ENCODE measurements at regions of chr5 and their contacts with region 1.

Region 1: GRCh38 chr5:140113699-140114263 is at the start of gene PURA:
- DNase-seq: peak; percentile 92
- ATAC-seq: peak; percentile 90
- H3K4me3 Mint-ChIP-seq: peak within 1 kb of the TSS; percentile 94
- H3K27ac Mint-ChIP-seq: peak within 1 kb of the TSS; percentile 92
- H3K4me1 Mint-ChIP-seq: peaks cover 72% of the 10 kb centered on the region
- H3K27me3 Mint-ChIP-seq: peaks cover 6% of the 10 kb centered on the region
- CTCF ChIP-seq: no peak
- total RNA-seq, gene PURA: 13.2 and 14.9 TPM in 2 replicates

Region 2: DNA sequence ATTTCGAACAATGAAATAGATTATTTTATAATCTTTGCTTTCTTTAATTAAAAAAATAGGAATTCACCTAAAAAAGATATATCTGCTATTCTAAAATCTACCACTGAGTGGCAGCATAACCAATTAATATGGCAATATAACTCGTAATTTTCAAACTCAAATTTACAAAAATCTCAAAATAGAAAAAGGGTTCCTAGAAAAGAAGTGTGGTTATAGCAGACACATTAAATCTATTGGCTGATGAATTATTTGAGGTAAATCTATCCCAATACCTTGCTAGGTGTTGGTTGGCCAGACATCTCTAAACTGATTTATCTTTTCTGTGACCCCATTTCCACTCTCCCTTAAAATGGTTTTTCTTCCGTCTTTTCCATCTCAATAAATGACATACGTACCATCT is 40.5 kb before region 1 on chr5:
- CTCF ChIA-PET with region 1: interaction called, 6 read pairs
- POLR2A ChIA-PET with region 1: interaction called, 5 read pairs
- intact Hi-C with region 1: loop called (anchors 2 kb)
- DNase-seq: no peak
- ATAC-seq: no peak
- H3K4me3 Mint-ChIP-seq: no peak overlapping the region
- H3K27ac Mint-ChIP-seq: no peak overlapping the region
- H3K4me1 Mint-ChIP-seq: no peaks in the 10 kb centered on the region
- H3K27me3 Mint-ChIP-seq: peaks cover 17% of the 10 kb centered on the region
- CTCF ChIP-seq: peak; percentile 87

Region 3: GRCh38 chr5:140131967-140132409 is 18.2 kb after region 1 on chr5:
- CTCF ChIA-PET with region 1: interaction called, 3 read pairs
- POLR2A ChIA-PET with region 1: interaction called, 9 read pairs
- intact Hi-C with region 1: loop called (anchors 2 kb)
- DNase-seq: no peak
- ATAC-seq: peak; percentile 49
- H3K4me3 Mint-ChIP-seq: no peak overlapping the region
- H3K27ac Mint-ChIP-seq: no peak overlapping the region
- H3K4me1 Mint-ChIP-seq: peaks cover 29% of the 10 kb centered on the region
- H3K27me3 Mint-ChIP-seq: no peaks in the 10 kb centered on the region
- CTCF ChIP-seq: no peak

Region 4: DNA sequence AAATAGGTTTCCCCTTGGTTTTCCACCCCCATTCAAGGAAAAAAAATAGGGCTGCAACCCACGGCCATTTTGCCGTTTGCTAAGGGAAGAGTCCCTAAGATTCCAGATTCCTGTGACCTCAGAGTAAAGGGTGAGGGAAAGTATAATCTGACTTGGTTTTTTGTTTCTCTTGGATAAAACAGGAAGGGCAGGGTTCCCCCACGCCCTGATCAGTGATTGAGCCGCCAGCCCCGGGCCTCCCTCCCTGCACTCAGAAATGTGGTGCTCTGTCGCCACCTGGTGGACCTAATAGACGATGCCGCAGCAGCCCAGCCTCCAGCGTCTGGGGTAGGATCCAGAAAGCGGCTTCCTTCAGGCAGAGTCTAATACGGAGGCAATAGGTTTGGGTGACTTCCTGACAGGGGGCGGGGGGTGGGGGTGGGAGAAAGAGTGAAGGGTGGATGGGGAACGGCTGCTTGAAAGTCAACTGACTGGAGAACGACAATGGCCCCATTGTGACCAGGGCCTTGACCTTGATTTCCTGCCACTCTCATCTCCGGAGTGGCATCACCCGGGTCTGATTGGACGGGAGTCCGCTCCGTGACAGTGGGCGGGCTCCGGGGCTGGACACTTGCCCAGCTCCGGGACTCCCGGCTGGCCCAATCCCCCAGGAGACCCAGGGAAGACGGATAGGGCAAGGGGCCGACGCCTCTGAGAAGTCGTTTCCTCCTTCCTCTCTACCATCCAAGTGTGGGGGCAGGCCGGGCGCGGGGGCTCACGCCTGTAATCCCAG is 43.4 kb after region 1 on chr5:
- CTCF ChIA-PET with region 1: no interaction called
- POLR2A ChIA-PET with region 1: no interaction called
- intact Hi-C with region 1: loop called (anchors 2 kb)
- DNase-seq: peak; percentile 75
- ATAC-seq: peak; percentile 100
- H3K4me3 Mint-ChIP-seq: peak overlapping the region; percentile 66
- H3K27ac Mint-ChIP-seq: no peak overlapping the region
- H3K4me1 Mint-ChIP-seq: peaks cover 10% of the 10 kb centered on the region
- H3K27me3 Mint-ChIP-seq: no peaks in the 10 kb centered on the region
- CTCF ChIP-seq: no peak

Region 5: DNA sequence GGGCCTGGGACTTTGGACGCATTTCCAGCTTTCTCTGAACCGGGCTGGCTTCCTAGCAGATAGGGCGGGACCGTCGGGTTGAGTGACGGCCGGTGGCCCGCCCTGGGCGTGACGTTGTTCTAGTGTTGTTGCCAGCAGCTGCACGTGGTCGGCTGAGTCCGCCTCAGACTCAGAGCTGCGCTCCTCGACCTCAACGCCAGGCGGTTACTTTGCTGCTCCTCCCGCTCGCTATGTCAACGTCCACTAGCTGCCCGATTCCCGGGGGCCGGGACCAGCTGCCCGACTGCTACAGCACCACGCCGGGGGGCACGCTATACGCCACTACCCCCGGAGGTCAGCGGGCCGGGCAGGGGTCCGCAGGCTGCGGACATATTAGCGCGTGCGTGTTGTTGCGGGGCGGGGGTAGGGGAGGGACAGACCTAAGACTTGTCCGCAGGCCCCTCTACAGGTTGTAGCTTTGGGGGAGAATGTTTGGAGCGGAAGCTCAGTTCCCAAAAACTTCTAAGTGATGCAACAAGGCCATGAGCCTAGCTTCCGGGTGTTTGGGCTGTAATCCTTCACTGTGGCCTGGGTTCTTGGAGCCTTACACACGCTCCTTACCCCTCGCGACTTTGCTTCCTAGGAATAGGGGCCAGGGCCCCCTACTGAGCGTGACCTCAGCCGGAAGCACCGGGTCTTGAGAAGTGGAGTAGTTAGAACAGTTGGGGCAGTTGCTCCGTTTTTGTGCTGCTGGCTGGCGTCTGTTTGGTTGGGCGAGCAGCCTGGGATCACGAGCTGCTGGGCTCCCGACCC is 433.9 kb after region 1 on chr5 and contains the start of gene EIF4EBP3:
- CTCF ChIA-PET with region 1: no interaction called
- POLR2A ChIA-PET with region 1: interaction called, 16 read pairs
- intact Hi-C with region 1: no loop called
- DNase-seq: peak; percentile 74
- ATAC-seq: peak; percentile 97
- H3K4me3 Mint-ChIP-seq: peak within 1 kb of the TSS; percentile 86
- H3K27ac Mint-ChIP-seq: peak within 1 kb of the TSS; percentile 95
- H3K4me1 Mint-ChIP-seq: peaks cover 28% of the 10 kb centered on the region
- H3K27me3 Mint-ChIP-seq: no peaks in the 10 kb centered on the region
- CTCF ChIP-seq: no peak
- total RNA-seq, gene EIF4EBP3: 14.4 and 18.2 TPM in 2 replicates